HCT116 (cell line): ENCODE measurements at regions of chr1 and their contacts with region 1.

Region 1: GRCh38 chr1:221344693-221345092 is 397.2 kb downstream of the DUSP10 start:
- DNase-seq: no peak
- ATAC-seq: no peak
- H3K4me3 ChIP-seq: no peak overlapping the region
- H3K27ac ChIP-seq: no peak overlapping the region
- H3K4me1 ChIP-seq: no peaks in the 10 kb centered on the region
- H3K27me3 ChIP-seq: no peaks in the 10 kb centered on the region
- CTCF ChIP-seq: no peak
- POLR2A ChIP-seq: no peak
- RAD21 ChIP-seq: no peak

Region 2: DNA sequence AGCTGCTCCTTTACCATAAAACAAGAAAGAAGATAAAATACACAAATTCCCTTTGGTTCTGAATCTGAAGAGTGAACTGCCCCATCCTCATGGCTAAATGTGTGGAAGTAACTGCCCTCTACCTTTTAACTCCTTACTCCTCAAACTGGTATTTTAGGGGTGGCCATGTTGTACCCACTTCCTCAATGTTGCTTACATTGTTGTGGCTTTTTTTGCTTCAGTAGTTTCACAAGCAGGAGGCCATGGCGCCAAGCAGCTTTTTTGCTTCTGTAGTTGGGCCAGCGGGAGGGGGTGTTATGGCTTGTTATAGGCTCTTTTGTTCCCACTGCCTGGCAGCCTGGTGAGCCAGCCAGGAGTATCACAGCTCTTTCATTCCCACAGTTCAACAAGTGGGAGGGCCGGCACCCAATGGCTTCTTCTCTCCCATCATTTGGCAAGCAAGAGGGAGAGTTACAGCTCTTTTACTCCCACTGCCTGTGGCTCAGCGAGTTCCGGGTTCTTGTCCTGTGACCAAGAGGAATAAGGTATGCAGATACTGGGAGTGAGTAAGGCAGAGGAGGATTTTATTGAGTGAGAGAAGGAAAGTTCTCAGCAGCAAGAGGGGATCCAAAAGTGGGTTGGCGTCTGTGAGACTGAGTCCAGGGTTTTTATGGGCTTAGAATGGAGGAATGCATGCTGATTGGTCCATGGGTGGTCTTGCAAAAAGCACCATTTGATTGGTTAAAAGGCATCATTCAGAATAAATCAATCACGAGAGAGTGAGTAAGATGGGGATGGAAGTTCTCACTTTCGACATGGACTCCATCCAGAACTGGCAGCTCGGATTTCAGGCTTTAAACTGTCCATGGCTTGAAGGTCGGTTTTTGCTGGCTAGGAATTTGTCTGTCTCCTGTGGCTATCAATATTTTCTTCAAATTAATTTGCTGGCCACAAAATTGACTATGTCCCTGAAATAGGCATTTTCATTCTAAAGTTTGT is 35.9 kb before region 1 on chr1:
- CTCF ChIA-PET with region 1: no interaction called
- POLR2A ChIA-PET with region 1: no interaction called
- RAD21 ChIA-PET with region 1: no interaction called
- intact Hi-C with region 1: loop called (anchors 1 kb)
- DNase-seq: no peak
- ATAC-seq: no peak
- H3K4me3 ChIP-seq: no peak overlapping the region
- H3K27ac ChIP-seq: no peak overlapping the region
- H3K4me1 ChIP-seq: no peaks in the 10 kb centered on the region
- H3K27me3 ChIP-seq: no peaks in the 10 kb centered on the region
- CTCF ChIP-seq: no peak
- POLR2A ChIP-seq: no peak
- RAD21 ChIP-seq: no peak